ENCODE measurements at regions of chr19 and their contacts with region 1.

Region 1: GRCh38 chr19:19663256-19664038 is at the start of gene ATP13A1:
- DNase-seq: peak; percentile 93
- H3K4me3 Mint-ChIP-seq: peak within 1 kb of the TSS; percentile 91
- H3K27ac Mint-ChIP-seq: peak within 1 kb of the TSS; percentile 98
- H3K4me1 Mint-ChIP-seq: peaks cover 28% of the 10 kb centered on the region
- H3K27me3 Mint-ChIP-seq: no peaks in the 10 kb centered on the region
- total RNA-seq, gene ATP13A1: 101 and 104 TPM in 2 replicates

Region 2: GRCh38 chr19:19404879-19405860 is 258.3 kb before region 1 on chr19 and contains the start of gene GATAD2A:
- intact Hi-C with region 1: loop called (anchors 1 kb)
- DNase-seq: peak; percentile 88
- H3K4me3 Mint-ChIP-seq: peak within 1 kb of the TSS; percentile 99
- H3K27ac Mint-ChIP-seq: peak within 1 kb of the TSS; percentile 97
- H3K4me1 Mint-ChIP-seq: peaks cover 60% of the 10 kb centered on the region
- H3K27me3 Mint-ChIP-seq: no peaks in the 10 kb centered on the region
- total RNA-seq, gene GATAD2A: 139 and 142 TPM in 2 replicates

Region 3: GRCh38 chr19:19618219-19619051 is 45.0 kb before region 1 on chr19 and contains the start of gene PBX4:
- intact Hi-C with region 1: loop called (anchors 1 kb)
- DNase-seq: peak; percentile 99
- H3K4me3 Mint-ChIP-seq: peak within 1 kb of the TSS; percentile 88
- H3K27ac Mint-ChIP-seq: peak within 1 kb of the TSS; percentile 95
- H3K4me1 Mint-ChIP-seq: peaks cover 48% of the 10 kb centered on the region
- H3K27me3 Mint-ChIP-seq: no peaks in the 10 kb centered on the region
- total RNA-seq, gene PBX4: 28.0 and 29.6 TPM in 2 replicates

Region 4: DNA sequence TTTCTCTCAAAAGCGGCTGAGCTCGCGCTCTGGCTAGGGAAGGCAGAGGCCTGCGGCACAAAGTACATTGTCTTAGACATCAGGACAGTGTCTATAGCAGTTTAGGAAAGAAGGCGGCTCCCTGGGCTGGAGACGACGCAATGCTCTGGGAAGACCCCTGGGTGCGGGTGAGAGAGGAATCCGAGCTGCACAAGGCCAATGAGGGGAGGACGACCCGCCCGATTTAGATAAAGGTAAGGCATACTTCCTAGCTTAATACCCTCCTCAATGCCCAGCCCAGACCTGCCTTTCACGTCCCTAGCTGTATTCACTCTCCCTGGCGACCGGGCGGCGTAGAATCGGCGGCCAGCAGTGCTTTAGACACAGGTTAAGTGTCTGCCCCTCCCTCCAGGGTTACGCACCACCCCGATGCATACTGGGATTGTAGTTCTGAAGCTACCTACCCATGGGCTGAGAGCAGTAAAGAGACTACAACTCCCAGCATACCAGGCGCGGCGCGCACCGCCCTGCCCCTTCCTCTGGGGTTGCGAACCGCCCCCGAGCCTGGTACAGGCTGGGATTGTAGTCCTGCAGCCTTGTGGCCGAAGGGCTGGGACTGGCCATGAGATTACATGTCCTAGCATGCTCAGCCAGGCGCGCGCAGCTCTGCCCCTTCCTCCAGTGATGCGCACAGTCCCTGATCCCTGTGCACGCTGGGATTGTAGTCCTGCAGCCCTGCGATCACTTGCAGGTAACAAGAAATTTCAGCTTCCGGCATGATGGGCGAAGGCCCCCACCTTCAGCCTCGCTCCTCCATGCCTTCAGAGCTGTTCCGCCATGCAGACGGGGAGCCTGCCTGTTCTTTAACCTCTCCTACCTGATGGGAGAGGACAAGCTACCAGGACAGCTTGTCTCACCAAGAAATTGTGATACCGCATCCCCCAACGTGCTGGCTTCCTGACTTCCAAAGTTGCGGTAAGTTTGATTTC is 112.9 kb after region 1 on chr19:
- intact Hi-C with region 1: loop called (anchors 1 kb)
- DNase-seq: peak; percentile 90
- H3K4me3 Mint-ChIP-seq: peak overlapping the region; percentile 96
- H3K27ac Mint-ChIP-seq: peak overlapping the region; percentile 89
- H3K4me1 Mint-ChIP-seq: peaks cover 42% of the 10 kb centered on the region
- H3K27me3 Mint-ChIP-seq: no peaks in the 10 kb centered on the region

Region 5: DNA sequence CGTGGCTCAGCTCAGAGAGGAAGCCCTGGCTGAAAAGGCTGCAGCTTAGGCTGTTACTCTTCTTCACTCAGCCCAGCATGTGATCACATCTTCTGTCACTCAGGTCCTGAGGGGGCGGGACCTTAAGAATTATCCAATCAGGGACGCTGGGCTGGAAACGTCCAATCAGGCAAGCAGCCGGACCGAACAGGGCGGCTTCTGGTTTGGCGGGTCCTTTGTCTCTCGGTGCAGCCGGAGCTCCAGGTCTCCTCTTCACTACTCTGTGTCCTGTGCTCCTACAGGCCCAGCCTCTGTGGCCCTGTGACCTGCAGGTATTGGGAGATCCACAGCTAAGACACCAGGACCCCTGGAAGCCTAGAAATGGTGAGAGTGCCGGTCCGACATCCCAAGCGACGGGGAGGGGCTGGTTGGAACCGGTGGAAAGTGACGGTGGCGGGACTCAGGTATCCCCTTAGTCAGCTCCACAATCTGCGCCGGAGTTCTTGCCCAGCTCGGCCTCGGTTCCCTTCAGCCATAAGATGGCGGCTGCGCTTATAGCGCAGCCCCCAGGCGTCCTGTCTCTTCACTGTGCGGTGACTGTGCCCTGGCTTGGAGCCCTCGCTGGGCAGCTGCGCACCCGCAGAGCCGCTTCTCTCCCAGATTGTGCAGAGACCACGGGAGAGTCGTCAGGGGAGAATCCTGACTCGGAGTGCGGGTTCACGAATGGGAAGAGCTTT is 237.4 kb after region 1 on chr19 and contains the start of gene ZNF93:
- intact Hi-C with region 1: loop called (anchors 2 kb)
- DNase-seq: peak; percentile 85
- H3K4me3 Mint-ChIP-seq: peak within 1 kb of the TSS; percentile 95
- H3K27ac Mint-ChIP-seq: peak within 1 kb of the TSS; percentile 90
- H3K4me1 Mint-ChIP-seq: peaks cover 16% of the 10 kb centered on the region
- H3K27me3 Mint-ChIP-seq: no peaks in the 10 kb centered on the region
- total RNA-seq, gene ZNF93: 6.8 and 7.2 TPM in 2 replicates

Region 6: DNA sequence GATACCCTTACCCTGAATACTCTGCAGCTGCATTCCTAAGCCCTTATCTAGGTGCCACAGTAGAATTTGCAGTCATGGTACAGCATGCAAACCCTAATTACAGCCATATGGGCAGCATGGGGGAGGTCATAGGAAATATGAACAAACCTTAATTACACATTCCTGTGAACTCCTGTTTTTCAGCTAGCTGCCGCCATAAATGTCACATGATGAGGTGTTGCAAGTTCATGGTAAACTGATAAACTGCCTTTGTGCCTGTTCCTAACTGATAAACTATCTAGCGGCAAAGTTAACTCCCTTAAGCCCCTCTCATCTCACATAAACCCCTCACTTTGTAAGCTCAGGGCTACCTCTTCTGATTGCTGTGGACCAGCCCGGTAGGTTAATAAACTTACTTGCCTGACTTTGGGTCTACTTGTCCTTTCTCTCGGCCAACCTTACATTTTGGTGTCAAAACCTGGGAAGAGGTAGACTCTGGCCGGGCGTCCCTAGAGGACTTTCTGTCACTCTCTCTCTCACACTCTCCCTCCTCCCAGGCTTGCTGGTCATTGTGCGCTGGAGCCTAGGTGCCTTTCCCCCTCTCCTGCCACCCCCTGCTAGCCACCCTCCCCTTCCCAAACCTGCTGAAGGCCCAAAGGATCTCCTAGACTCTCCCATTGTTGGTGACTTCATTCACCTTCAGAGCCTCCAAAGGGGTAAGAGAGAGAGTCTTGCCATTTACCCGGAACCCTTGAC is 280.6 kb after region 1 on chr19:
- intact Hi-C with region 1: no loop called
- DNase-seq: no peak
- H3K4me3 Mint-ChIP-seq: no peak overlapping the region
- H3K27ac Mint-ChIP-seq: no peak overlapping the region
- H3K4me1 Mint-ChIP-seq: no peaks in the 10 kb centered on the region
- H3K27me3 Mint-ChIP-seq: no peaks in the 10 kb centered on the region

Region 7: GRCh38 chr19:20776083-20777076 is 1112.9 kb after region 1 on chr19 and contains the start of gene ZNF66:
- intact Hi-C with region 1: loop called (anchors 1 kb)
- DNase-seq: peak; percentile 91
- H3K4me3 Mint-ChIP-seq: peak within 1 kb of the TSS; percentile 99
- H3K27ac Mint-ChIP-seq: peak within 1 kb of the TSS; percentile 96
- H3K4me1 Mint-ChIP-seq: no peaks in the 10 kb centered on the region
- H3K27me3 Mint-ChIP-seq: no peaks in the 10 kb centered on the region
- total RNA-seq, gene ZNF66: 8.4 and 9.2 TPM in 2 replicates